ENCODE measurements at regions of chr9 and their contacts with region 1.

Region 1: GRCh38 chr9:116572095-116572748 is 114.9 kb upstream of the TRIM32 start:
- DNase-seq: peak; percentile 87
- ATAC-seq: peak; percentile 92 to 94
- H3K4me3 ChIP-seq: no peak overlapping the region
- H3K27ac ChIP-seq: peak overlapping the region; percentile 93 to 99
- H3K4me1 ChIP-seq: peaks cover 69% of the 10 kb centered on the region
- CTCF ChIP-seq: peak; percentile 93
- EP300 ChIP-seq: peak in 1 of 2 experiments; percentile 43; a peak in 1 of 5 replicates
- POLR2A ChIP-seq: no peak
- RAD21 ChIP-seq: peak; percentile 99

Region 2: DNA sequence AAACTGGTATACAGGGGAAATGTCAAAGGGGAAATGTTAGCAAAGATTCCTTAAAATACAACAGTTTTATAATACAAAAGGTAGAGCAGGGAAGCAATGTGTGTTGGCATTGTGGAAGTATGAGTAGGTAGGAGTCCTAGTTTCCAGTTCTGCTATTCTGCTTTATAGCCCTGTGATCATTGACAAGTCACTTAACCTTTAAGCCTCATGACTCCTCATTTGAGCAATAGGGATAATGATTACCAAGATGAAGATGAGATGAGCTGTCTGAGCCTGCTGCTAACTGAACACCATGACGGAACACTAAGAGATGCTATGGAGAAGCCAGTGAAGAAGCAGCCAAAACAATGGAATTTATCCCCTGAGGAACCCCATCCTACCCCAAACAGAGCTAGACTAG is 166.9 kb before region 1 on chr9:
- CTCF ChIA-PET with region 1: interaction called, 33 read pairs
- POLR2A ChIA-PET with region 1: interaction called, 7 read pairs
- DNase-seq: no peak
- ATAC-seq: peak; percentile 47 to 50
- H3K4me3 ChIP-seq: no peak overlapping the region
- H3K27ac ChIP-seq: peak overlapping the region in 1 of 2 experiments; percentile 51; a peak in 2 of 6 replicates
- H3K4me1 ChIP-seq: peaks cover 16% of the 10 kb centered on the region; the same call in 1 of the 3 replicates
- CTCF ChIP-seq: no peak
- EP300 ChIP-seq: no peak
- POLR2A ChIP-seq: no peak
- RAD21 ChIP-seq: no peak

Region 3: GRCh38 chr9:116494815-116495634 is 77.2 kb before region 1 on chr9:
- CTCF ChIA-PET with region 1: interaction called, 11 read pairs
- POLR2A ChIA-PET with region 1: no interaction called
- DNase-seq: peak in 1 of 2 experiments; percentile 32
- ATAC-seq: peak in 1 of 2 experiments; percentile 42; a peak in 2 of 6 replicates
- H3K4me3 ChIP-seq: no peak overlapping the region
- H3K27ac ChIP-seq: peak overlapping the region; percentile 35 to 85; a peak in 4 of 6 replicates
- H3K4me1 ChIP-seq: peaks cover 50% of the 10 kb centered on the region
- CTCF ChIP-seq: peak; percentile 60
- EP300 ChIP-seq: no peak
- POLR2A ChIP-seq: no peak
- RAD21 ChIP-seq: peak; percentile 39 to 49; a peak in 4 of 5 replicates

Region 4: GRCh38 chr9:116549061-116549664 is 23.1 kb before region 1 on chr9:
- CTCF ChIA-PET with region 1: interaction called, 25 read pairs
- POLR2A ChIA-PET with region 1: no interaction called
- DNase-seq: peak; percentile 89 to 95
- ATAC-seq: peak; percentile 94 to 95
- H3K4me3 ChIP-seq: no peak overlapping the region
- H3K27ac ChIP-seq: peak overlapping the region; percentile 98
- H3K4me1 ChIP-seq: peaks cover 68% of the 10 kb centered on the region
- CTCF ChIP-seq: no peak
- EP300 ChIP-seq: peak; percentile 93 to 96; a peak in 4 of 5 replicates
- POLR2A ChIP-seq: no peak
- RAD21 ChIP-seq: peak; percentile 26 to 64

Region 5: GRCh38 chr9:116589392-116590354 is 17.5 kb after region 1 on chr9:
- CTCF ChIA-PET with region 1: interaction called, 11 read pairs
- POLR2A ChIA-PET with region 1: no interaction called
- DNase-seq: peak; percentile 49 to 84
- ATAC-seq: peak; percentile 66 to 99; a peak in 5 of 6 replicates
- H3K4me3 ChIP-seq: no peak overlapping the region
- H3K27ac ChIP-seq: no peak overlapping the region
- H3K4me1 ChIP-seq: peaks cover 8% of the 10 kb centered on the region; the same call in 2 of the 3 replicates
- CTCF ChIP-seq: peak; percentile 62
- EP300 ChIP-seq: no peak
- POLR2A ChIP-seq: no peak
- RAD21 ChIP-seq: peak in 1 of 2 experiments; percentile 57; a peak in 3 of 5 replicates